ENCODE measurements at regions of chr1 and their contacts with region 1.

Region 1: DNA sequence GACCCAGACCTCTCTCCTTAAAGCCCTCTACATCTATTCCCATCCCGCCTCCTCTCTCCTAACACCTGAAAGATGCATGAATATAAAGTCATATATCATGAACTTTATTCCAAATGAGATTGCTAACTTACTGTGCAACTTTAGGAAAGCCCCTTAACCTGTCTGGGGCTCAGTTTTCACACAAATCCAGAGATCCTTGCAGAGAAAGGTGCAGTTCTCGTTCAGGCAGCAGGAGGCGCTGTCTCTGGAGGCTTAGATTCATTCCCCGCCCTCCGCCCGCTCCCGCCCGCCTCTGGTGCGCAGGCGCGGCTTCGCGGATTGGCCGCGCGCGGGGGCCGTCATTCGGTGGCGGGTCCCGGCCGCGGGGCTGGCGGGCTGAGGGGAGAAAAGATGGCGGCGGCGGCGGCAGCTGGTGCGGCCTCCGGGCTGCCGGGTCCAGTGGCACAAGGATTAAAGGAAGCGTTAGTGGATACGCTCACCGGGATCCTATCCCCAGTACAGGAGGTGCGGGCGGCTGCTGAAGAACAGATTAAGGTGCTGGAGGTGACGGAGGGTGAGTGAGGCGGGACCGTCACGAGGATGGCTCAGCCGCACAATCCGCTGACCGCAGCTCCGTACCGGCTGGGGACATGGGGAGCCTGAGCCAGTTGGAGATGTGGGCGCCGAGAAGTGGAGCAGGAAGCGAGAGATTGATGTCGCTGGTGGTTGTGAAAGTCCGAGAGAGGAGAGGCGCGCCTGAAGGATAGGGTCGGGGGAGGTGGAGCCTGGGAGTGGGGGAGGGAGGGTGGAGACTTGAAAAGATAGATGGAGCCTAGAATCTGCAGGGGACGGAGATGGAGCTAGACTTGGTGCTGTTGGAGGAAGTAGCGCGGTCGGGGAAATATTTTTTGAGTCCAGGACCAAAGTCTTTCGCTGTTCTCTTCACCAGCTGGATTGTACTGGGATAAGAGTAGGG is at the start of gene IPO9:
- DNase-seq: peak; percentile 97
- total RNA-seq, gene IPO9: 24.7 TPM

Region 2: DNA sequence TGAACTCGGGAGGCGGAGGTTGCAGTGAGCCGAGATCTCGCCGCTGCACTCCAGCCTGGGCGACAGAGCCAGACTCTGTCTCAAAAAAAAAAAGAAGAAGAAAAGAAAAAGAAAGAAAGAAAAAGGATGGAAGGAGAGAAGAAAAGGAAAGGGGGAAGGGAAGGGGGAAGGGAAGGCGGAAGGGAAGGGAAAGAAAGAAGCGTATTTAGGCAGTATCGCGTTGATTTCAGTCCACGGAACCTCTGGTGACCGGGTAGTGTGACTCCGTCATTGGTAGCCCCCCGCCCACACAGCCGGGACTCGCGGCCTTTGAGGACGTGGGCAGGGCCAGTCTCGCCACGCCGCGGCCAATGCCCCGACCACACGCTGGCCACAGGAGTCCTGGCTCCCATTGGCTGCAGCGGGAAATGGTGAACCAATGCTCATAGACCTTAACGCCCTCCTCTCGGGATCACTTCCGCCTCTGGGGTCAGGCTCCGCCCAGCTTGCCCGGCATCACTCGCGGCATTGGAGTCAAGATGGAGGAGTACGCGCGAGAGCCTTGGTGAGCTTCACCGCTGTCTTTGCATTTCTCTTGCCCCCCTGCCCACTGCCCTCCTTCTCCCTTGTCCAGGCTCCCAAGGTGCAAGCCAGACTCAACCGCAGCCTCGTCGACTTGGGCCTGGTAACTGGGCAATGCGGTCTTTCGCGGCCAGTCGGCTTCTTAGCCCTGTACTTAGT is 126.1 kb after region 1 on chr1 and contains the start of gene TIMM17A:
- intact Hi-C with region 1: loop called (anchors 5 kb)
- DNase-seq: peak; percentile 99
- total RNA-seq, gene TIMM17A: 79.1 TPM